OCI-LY7 (cell line): ENCODE measurements at regions of chr18 and their contacts with region 1.

Region 1: GRCh38 chr18:48951448-48952286 is 902 bp upstream of the SMAD7 start:
- DNase-seq: peak; percentile 84
- H3K4me3 ChIP-seq: peak overlapping the region; percentile 95
- H3K27ac ChIP-seq: peak overlapping the region; percentile 84
- H3K4me1 ChIP-seq: peaks cover 40% of the 10 kb centered on the region
- CTCF ChIP-seq: 0 out of 2 replicates have a peak, but pooled peaks have one; percentile 22

Region 2: GRCh38 chr18:48777026-48777743 is 174.5 kb before region 1 on chr18:
- CTCF ChIA-PET with region 1: no interaction called
- POLR2A ChIA-PET with region 1: interaction called, 3 read pairs
- intact Hi-C with region 1: loop called (anchors 2 kb)
- DNase-seq: peak; percentile 68
- H3K4me3 ChIP-seq: no peak overlapping the region
- H3K27ac ChIP-seq: no peak overlapping the region
- H3K4me1 ChIP-seq: peaks cover 34% of the 10 kb centered on the region
- CTCF ChIP-seq: peak; percentile 86

Region 3: DNA sequence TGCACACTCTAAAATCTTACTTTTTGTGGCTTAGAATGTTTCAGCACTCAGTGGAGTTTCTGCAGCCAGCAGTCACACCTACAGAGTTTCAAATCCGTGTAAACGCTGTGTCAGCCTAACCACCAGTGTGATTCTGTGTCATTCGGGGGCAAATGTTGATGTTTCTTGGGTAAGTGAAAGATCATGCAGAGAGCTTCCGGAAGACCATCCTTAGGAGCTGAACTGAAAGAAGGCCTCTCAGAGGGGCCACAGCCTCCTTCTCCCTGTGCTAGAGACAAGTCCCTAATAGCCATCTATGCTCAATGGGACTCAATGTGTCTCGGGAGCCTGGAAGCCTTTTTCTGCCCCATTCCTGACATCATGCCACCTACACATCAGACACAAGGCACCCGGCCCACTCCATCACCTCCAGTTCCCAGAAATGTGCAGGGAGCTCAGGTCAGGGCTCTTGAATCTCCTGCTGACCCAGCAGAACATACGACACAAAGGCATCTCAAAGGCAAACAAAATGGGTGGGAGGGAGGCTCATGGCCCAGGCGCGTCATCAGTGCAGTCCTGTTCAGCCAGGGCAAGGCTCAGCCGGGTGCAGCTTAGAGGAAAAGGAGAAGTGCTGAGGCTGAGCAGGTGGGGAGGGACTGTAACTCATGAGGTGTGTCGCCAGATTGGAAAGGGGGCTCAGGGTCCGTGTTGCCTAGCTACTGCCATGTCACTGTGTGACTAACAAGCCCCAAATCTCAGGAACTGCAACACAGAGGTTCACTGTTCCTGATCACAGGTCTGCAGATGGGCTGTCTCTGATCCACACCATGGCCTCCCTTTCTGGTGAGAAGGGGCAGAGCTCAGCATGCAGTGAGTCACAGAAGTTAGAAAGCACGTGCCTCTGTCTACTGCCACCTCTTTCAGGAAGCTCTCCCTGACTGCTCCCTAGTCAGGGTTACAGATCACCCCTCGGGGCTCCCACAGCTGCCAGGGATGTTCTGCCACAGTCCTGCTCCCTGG is 82.9 kb before region 1 on chr18:
- CTCF ChIA-PET with region 1: no interaction called
- POLR2A ChIA-PET with region 1: no interaction called
- intact Hi-C with region 1: loop called (anchors 2 kb)
- DNase-seq: peak; percentile 86
- H3K4me3 ChIP-seq: no peak overlapping the region
- H3K27ac ChIP-seq: peak overlapping the region; percentile 75
- H3K4me1 ChIP-seq: peaks cover 21% of the 10 kb centered on the region
- CTCF ChIP-seq: no peak

Region 4: GRCh38 chr18:48921305-48922225 is 30.1 kb before region 1 on chr18:
- CTCF ChIA-PET with region 1: no interaction called
- POLR2A ChIA-PET with region 1: interaction called, 4 read pairs
- intact Hi-C with region 1: loop called (anchors 1 kb)
- DNase-seq: no peak
- H3K4me3 ChIP-seq: no peak overlapping the region
- H3K27ac ChIP-seq: no peak overlapping the region
- H3K4me1 ChIP-seq: peaks cover 77% of the 10 kb centered on the region
- CTCF ChIP-seq: no peak

Region 5: DNA sequence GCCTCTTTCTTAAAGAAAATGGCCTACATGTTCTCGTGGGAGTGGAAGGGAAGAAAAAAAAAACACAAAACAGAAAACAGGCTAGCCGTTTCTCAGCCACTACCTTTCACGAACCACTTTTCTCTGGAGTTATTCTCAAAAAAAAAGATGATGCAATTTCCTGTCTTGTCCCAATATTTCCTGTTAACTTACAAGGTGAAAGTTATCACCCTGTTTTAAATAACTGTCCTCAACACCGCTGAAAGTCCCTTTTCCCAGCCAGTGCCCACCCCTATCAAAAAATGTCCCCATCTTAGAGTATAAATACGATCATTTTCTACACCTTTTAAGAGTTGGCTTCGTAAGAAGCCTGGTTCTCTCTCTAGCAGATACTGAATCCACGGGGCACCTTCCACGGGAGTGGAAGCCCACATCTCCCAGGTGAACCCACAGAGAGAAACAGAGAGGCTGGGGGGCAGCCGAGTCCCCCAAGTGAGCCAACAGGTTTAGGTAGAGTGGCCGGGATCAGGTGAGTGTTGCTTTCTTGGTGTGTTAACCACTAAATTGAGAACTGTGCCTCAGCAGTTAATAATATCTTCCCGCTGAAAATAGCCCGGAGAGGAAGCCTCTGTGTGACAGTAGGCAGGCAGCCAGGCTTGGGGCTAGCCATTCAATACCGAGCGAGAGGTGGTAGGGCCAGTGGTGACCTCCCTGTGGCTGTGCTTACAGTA is 16.8 kb before region 1 on chr18:
- CTCF ChIA-PET with region 1: no interaction called
- POLR2A ChIA-PET with region 1: interaction called, 3 read pairs
- intact Hi-C with region 1: loop called (anchors 2 kb)
- DNase-seq: peak; percentile 59
- H3K4me3 ChIP-seq: peak overlapping the region; percentile 58
- H3K27ac ChIP-seq: peak overlapping the region; percentile 90
- H3K4me1 ChIP-seq: peaks cover 79% of the 10 kb centered on the region
- CTCF ChIP-seq: no peak